Dendritic cell treated with granulocyte-macrophage colony-stimulating factor and Interleukin-4, amounts not matched to agents 40 ng/mL and 50 ng/mL, for 4 days (primary cell): ENCODE measurements at regions of chr11 and their contacts with region 1.

Region 1: GRCh38 chr11:88421530-88421929 is 84.0 kb upstream of the CTSC start:
- H3K4me3 Mint-ChIP-seq: peak overlapping the region; percentile 70
- H3K27ac Mint-ChIP-seq: peak overlapping the region; percentile 97
- H3K4me1 Mint-ChIP-seq: peaks cover 74% of the 10 kb centered on the region
- H3K27me3 Mint-ChIP-seq: no peaks in the 10 kb centered on the region

Region 2: DNA sequence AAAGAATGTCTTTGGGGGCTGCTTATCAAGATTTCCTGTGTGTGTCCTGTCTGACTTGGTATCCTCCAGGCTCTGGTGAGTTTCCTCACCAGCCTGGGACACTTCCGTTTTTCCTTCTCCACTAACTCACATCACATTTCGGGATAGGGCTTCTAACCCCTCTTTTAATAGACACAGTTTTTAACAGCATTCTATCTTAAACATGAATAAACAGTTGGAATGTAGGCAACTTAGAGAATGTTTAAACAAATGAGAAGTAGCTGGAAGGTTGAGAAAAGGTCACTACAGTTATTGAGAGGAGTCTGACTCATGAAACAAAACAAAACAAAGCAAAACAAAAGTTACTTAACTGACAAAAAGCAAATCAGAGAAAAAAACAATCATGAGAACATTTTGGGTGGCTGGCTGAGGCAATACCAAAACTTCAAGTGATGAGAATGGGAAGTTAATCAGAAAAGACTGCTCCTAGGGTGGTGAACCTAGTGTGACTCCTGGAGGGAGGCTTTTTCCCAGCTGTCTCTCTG is 19.3 kb before region 1 on chr11:
- intact Hi-C with region 1: loop called (anchors 2 kb)
- H3K4me3 Mint-ChIP-seq: peak overlapping the region; percentile 39
- H3K27ac Mint-ChIP-seq: peak overlapping the region; percentile 83
- H3K4me1 Mint-ChIP-seq: peaks cover 40% of the 10 kb centered on the region
- H3K27me3 Mint-ChIP-seq: no peaks in the 10 kb centered on the region

Region 3: DNA sequence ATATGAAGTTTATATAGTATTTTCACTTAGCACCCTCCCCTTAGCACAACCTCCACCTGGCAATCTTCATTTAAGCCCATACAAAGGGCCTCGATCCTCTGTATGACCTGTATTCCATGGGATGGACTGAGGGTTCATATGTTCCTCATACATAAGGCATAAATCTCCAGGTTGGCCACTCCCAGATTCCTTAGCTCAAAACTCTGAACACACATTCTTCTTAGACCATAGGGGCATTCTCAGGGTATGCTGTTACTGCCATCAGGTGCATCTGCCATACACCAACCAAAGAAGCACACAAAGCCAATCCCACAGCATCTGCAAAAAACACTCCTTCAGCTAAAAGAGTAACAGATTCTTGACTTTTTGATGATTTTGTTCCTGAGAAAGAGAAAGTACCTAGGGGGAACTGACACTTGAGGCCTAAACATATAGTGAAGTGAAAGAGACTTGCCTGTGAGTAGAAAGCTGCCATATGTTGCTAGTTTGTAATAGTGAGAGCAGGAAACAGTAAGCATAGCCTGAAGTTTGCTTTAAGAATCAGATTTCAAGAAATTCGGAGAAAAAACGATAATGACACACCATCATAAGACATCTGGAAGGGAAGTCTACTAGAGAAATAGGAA is 13.8 kb after region 1 on chr11:
- intact Hi-C with region 1: loop called (anchors 2 kb)
- H3K4me3 Mint-ChIP-seq: peak overlapping the region; percentile 27
- H3K27ac Mint-ChIP-seq: peak overlapping the region; percentile 86
- H3K4me1 Mint-ChIP-seq: peaks cover 86% of the 10 kb centered on the region
- H3K27me3 Mint-ChIP-seq: no peaks in the 10 kb centered on the region